ENCODE measurements at regions of chr6 and their contacts with region 1.

Region 1: GRCh38 chr6:166005944-166006899 is 161.4 kb downstream of the TBXT start:
- DNase-seq: peak; percentile 66 to 75
- ATAC-seq: peak; percentile 63 to 90 (median 78)
- H3K4me3 ChIP-seq: peak overlapping the region in 9 of 10 donors; percentile 19 to 52 (median 38)
- H3K27ac ChIP-seq: peak overlapping the region; percentile 39 to 90 (median 75)
- H3K4me1 ChIP-seq: peaks cover 4 to 45% (median 28%) of the 10 kb centered on the region in 9 donors
- H3K27me3 ChIP-seq: peaks cover 5 to 62% (median 61%) of the 10 kb centered on the region in 7 donors
- CTCF ChIP-seq: no peak

Region 2: DNA sequence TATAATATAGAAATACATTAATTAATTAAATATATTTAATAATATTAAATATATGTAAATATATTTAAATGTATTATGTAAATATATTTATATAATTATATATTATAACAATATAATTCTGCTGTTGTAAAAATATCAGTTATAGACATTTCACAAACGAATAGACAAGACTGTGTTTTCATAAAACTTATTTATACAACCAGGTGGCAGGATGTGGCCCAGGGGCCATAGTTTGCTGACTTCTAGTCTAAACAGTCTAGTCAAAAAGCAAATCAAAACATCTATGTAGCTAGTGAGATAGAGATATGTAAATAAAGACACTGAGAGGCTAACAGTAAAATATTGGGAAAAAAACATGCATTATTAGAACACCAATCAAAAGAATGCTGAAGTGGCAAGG is 25.1 kb after region 1 on chr6:
- intact Hi-C with region 1: loop called in 1 of 10 experiments (anchors 2 kb)
- DNase-seq: no peak
- ATAC-seq: no peak
- H3K4me3 ChIP-seq: no peak overlapping the region
- H3K27ac ChIP-seq: no peak overlapping the region
- H3K4me1 ChIP-seq: peaks cover 0 to 12% (median 0%) of the 10 kb centered on the region in 9 donors
- H3K27me3 ChIP-seq: peaks cover 0 to 8% (median 0%) of the 10 kb centered on the region in 7 donors
- CTCF ChIP-seq: no peak

Region 3: DNA sequence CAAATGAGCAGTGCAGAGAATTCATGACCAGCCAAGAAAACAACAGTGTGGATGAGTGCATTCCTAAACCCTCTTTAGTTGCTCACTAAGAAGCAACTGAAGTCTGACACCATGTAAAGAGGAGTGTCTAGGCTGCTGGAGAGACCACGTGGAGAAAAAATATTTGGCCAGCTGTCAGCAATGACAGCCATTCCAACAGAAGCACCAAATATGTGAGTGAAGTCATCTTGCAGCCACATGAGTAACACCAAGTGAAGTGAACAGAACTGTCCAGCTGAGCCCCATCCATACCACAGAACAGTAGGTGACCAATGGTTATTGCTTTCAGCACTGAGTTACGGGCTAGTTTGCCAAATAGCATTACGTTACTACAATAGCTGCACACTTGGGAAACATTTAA is 72.1 kb after region 1 on chr6:
- intact Hi-C with region 1: no loop called
- DNase-seq: no peak
- ATAC-seq: peak in 3 of 8 donors; percentile 49 to 86 (median 50)
- H3K4me3 ChIP-seq: no peak overlapping the region
- H3K27ac ChIP-seq: no peak overlapping the region
- H3K4me1 ChIP-seq: peaks cover 0 to 3% (median 0%) of the 10 kb centered on the region in 9 donors
- H3K27me3 ChIP-seq: peaks cover 0 to 19% (median 13%) of the 10 kb centered on the region in 7 donors
- CTCF ChIP-seq: no peak

Region 4: GRCh38 chr6:166097915-166098522 is 91.8 kb after region 1 on chr6:
- intact Hi-C with region 1: loop called in 2 of 10 experiments (anchors 5 to 10 kb)
- DNase-seq: peak; percentile 69 to 74
- ATAC-seq: peak; percentile 85 to 98 (median 94)
- H3K4me3 ChIP-seq: peak overlapping the region in 8 of 10 donors; percentile 9 to 49 (median 40)
- H3K27ac ChIP-seq: no peak overlapping the region
- H3K4me1 ChIP-seq: peaks cover 0 to 4% (median 0%) of the 10 kb centered on the region in 9 donors
- H3K27me3 ChIP-seq: peaks cover 0 to 20% (median 14%) of the 10 kb centered on the region in 7 donors
- CTCF ChIP-seq: peak; percentile 58 to 89 (median 88)